Ovary (tissue), 10 donors: ENCODE measurements at regions of chr2 and their contacts with region 1.

Region 1: DNA sequence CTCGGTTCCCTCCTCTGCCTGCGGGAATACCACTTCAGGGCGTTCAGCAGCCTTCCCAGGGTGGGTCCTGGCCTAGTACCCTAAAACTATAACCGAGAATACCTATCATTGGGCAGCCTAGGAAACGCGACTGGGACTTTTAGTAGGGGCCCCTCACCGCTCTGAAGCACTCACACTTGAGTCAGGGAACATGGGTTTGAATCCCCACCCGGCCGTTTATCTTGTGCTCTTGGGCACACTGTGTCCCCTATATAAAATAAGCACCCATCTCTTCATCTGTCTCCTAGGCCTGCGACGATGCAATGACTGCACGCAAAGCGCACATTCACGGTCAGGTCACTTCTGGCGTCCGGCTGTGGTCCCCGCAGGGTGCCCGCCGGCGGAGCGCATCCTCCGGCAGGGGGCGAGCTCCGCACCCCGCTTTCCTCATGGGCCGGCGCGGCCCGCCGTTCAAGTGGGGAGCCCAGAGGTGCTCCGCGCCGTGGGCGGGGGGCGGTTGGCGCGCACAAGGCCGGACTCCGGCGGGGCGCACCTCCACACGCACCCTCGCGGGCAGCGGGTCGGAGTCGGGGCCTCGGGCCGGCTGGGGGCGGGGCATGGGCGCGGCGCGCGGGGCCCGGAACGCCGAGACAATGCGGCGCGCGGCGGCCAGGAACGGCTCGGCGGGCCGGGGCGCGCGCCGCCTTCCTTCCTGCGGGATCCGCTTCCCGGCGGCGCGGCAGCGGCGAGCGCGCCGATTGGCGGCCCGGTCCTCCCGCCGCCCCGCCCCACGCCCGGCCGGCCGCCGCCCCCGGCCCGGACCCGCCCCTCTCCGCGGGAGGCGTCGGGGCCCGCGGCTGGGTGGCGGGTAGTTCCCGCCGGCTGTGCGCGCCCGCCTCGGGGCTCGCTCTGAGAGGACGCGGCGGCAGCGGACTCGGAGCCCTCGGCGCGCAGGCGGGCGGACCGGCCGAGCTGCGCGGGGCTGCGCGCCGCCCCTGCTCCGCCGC is at the start of gene ASAP2:
- DNase-seq: peak; percentile 72 to 84 (median 81)
- H3K4me3 ChIP-seq: peak within 1 kb of the TSS; percentile 90
- H3K27ac ChIP-seq: peak within 1 kb of the TSS; percentile 75 to 95
- H3K4me1 ChIP-seq: no peaks in the 10 kb centered on the region
- H3K27me3 ChIP-seq: no peaks in the 10 kb centered on the region
- CTCF ChIP-seq: peak; percentile 84 to 93 (median 89)
- EP300 ChIP-seq: no peak
- POLR2A ChIP-seq: peak; percentile 15
- total RNA-seq, gene ASAP2: 11.3 to 22.7 (median 17.3) TPM

Region 2: DNA sequence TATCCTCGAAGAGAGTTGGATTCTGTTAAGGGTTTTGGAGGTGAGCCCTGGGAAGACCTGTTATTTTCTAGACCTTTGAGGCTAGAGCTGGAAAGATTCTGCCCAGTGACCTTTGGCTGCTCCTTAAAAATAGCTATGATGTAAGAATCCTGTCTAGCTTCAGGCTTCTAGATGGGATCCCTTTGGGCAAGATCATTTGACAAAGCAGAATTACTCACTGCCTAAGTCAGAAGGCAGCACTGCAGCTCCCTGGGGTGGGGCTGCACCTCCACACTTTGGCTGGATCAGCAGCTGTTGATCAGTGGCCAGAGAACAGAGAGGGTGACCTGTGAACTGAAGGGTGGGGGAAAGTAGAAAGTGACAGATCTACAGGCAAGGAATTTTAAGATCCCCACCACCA is 104.1 kb after region 1 on chr2:
- intact Hi-C with region 1: loop called in 1 of 4 experiments (anchors 10 kb)
- DNase-seq: peak; percentile 41 to 60 (median 51)
- H3K4me3 ChIP-seq: no peak overlapping the region
- H3K27ac ChIP-seq: peak overlapping the region; percentile 22 to 37
- H3K4me1 ChIP-seq: peaks cover 9% of the 10 kb centered on the region
- H3K27me3 ChIP-seq: no peaks in the 10 kb centered on the region
- CTCF ChIP-seq: no peak
- EP300 ChIP-seq: no peak
- POLR2A ChIP-seq: no peak

Region 3: GRCh38 chr2:9333591-9334171 is 127.4 kb after region 1 on chr2:
- intact Hi-C with region 1: loop called in 3 of 4 experiments (anchors 5 to 10 kb)
- DNase-seq: peak; percentile 34 to 66 (median 48)
- H3K4me3 ChIP-seq: no peak overlapping the region
- H3K27ac ChIP-seq: no peak overlapping the region
- H3K4me1 ChIP-seq: peaks cover 4% of the 10 kb centered on the region
- H3K27me3 ChIP-seq: no peaks in the 10 kb centered on the region
- CTCF ChIP-seq: peak; percentile 38 to 51 (median 40)
- EP300 ChIP-seq: no peak
- POLR2A ChIP-seq: no peak